Naive thymus-derived CD8-positive, alpha-beta T cell (primary cell): ENCODE measurements at regions of chr2 and their contacts with region 1.

Region 1: GRCh38 chr2:53786705-53787612 is at the starts of genes ASB3 and ERLEC1:
- DNase-seq: peak; percentile 78 to 94 (median 88)
- ATAC-seq: peak; percentile 88 to 92
- H3K4me3 Mint-ChIP-seq: peak within 1 kb of the TSS; percentile 90 to 99 (median 96)
- H3K27ac Mint-ChIP-seq: peak within 1 kb of the TSS; percentile 91 to 99 (median 96)
- H3K4me1 Mint-ChIP-seq: peaks cover 23 to 71% (median 54%) of the 10 kb centered on the region in 4 donors
- H3K27me3 Mint-ChIP-seq: no peaks in the 10 kb centered on the region
- polyA plus RNA-seq, gene ASB3: 14.9 to 17.4 (median 16.4) TPM
- polyA plus RNA-seq, gene ERLEC1: 24.7 to 32.5 (median 28.7) TPM

Region 2: GRCh38 chr2:53767405-53768241 is 19.3 kb before region 1 on chr2 and contains the start of gene CHAC2:
- POLR2A ChIA-PET with region 1: interaction called, 34 read pairs
- DNase-seq: peak; percentile 73 to 90 (median 81)
- ATAC-seq: peak; percentile 89 to 94
- H3K4me3 Mint-ChIP-seq: peak within 1 kb of the TSS; percentile 90 to 98 (median 94)
- H3K27ac Mint-ChIP-seq: peak within 1 kb of the TSS; percentile 90 to 98 (median 94)
- H3K4me1 Mint-ChIP-seq: peaks cover 10 to 43% (median 38%) of the 10 kb centered on the region in 4 donors
- H3K27me3 Mint-ChIP-seq: no peaks in the 10 kb centered on the region
- polyA plus RNA-seq, gene CHAC2: 4.0 to 5.4 (median 4.1) TPM

Region 3: DNA sequence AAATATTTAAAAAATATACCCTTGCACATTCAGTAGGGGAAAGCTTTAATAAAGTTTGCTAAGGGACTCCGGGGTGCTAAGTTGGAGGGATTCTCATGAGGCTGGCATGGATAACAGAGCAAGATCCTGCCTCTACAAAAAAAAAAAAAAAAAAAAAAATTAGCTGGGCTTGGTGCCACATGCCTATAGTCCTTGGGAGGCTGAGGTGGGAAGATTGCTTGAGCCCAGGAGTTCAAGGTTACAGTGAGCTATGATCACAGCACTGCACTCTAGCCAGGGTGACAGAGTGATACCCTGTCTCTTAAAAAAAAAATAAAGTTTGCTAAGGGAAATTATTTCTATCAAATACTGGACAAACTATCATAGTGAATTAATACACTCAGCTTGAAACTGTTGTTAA is 90.2 kb after region 1 on chr2:
- POLR2A ChIA-PET with region 1: no interaction called
- DNase-seq: no peak
- ATAC-seq: no peak
- H3K4me3 Mint-ChIP-seq: no peak overlapping the region
- H3K27ac Mint-ChIP-seq: no peak overlapping the region
- H3K4me1 Mint-ChIP-seq: peaks cover 0 to 2% (median 0%) of the 10 kb centered on the region in 4 donors
- H3K27me3 Mint-ChIP-seq: no peaks in the 10 kb centered on the region